ENCODE measurements at regions of chr16 and their contacts with region 1.

Region 1: GRCh38 chr16:3282730-3283524 is at the start of gene ZNF263:
- DNase-seq: peak; percentile 97 to 98
- ATAC-seq: peak; percentile 94
- H3K4me3 ChIP-seq: peak within 1 kb of the TSS; percentile 80
- H3K27ac ChIP-seq: peak within 1 kb of the TSS; percentile 90 to 97
- H3K4me1 ChIP-seq: no peaks in the 10 kb centered on the region
- CTCF ChIP-seq: no peak
- EP300 ChIP-seq: no peak
- POLR2A ChIP-seq: peak; percentile 67
- RAD21 ChIP-seq: no peak; a peak in 1 of 5 replicates
- polyA plus RNA-seq, gene ZNF263: 20.9 and 38.4 TPM in 2 replicates

Region 2: GRCh38 chr16:3188925-3189825 is 93.8 kb before region 1 on chr16:
- CTCF ChIA-PET with region 1: no interaction called
- POLR2A ChIA-PET with region 1: interaction called, 10 read pairs
- DNase-seq: peak; percentile 52 to 91
- ATAC-seq: peak; percentile 44 to 57
- H3K4me3 ChIP-seq: peak overlapping the region; percentile 71
- H3K27ac ChIP-seq: peak overlapping the region; percentile 73 to 89
- H3K4me1 ChIP-seq: peaks cover 14% of the 10 kb centered on the region
- CTCF ChIP-seq: no peak
- EP300 ChIP-seq: no peak
- POLR2A ChIP-seq: peak; percentile 47
- RAD21 ChIP-seq: no peak

Region 3: GRCh38 chr16:3214904-3215600 is 67.9 kb before region 1 on chr16:
- CTCF ChIA-PET with region 1: no interaction called
- POLR2A ChIA-PET with region 1: no interaction called
- DNase-seq: no peak
- ATAC-seq: no peak
- H3K4me3 ChIP-seq: no peak overlapping the region
- H3K27ac ChIP-seq: no peak overlapping the region
- H3K4me1 ChIP-seq: no peaks in the 10 kb centered on the region
- CTCF ChIP-seq: no peak
- EP300 ChIP-seq: no peak
- POLR2A ChIP-seq: no peak
- RAD21 ChIP-seq: no peak

Region 4: GRCh38 chr16:3305109-3306068 is 22.5 kb after region 1 on chr16 and contains the starts of genes TIGD7 and ZNF75A:
- CTCF ChIA-PET with region 1: interaction called, 4 read pairs
- POLR2A ChIA-PET with region 1: interaction called, 12 read pairs
- DNase-seq: peak; percentile 79 to 95
- ATAC-seq: peak; percentile 99
- H3K4me3 ChIP-seq: peak within 1 kb of the TSS; percentile 58
- H3K27ac ChIP-seq: peak within 1 kb of the TSS; percentile 74 to 90
- H3K4me1 ChIP-seq: no peaks in the 10 kb centered on the region
- CTCF ChIP-seq: no peak
- EP300 ChIP-seq: no peak
- POLR2A ChIP-seq: peak; percentile 77
- RAD21 ChIP-seq: 0 out of 5 replicates have a peak, but pooled peaks of 1 of the 2 experiments have one; percentile 9
- polyA plus RNA-seq, gene TIGD7: 3.0 and 4.3 TPM in 2 replicates
- polyA plus RNA-seq, gene ZNF75A: 27.3 and 28.8 TPM in 2 replicates

Region 5: GRCh38 chr16:3317315-3317999 is 34.5 kb after region 1 on chr16:
- CTCF ChIA-PET with region 1: no interaction called
- POLR2A ChIA-PET with region 1: no interaction called
- DNase-seq: peak in 1 of 2 experiments; percentile 51
- ATAC-seq: no peak
- H3K4me3 ChIP-seq: no peak overlapping the region
- H3K27ac ChIP-seq: no peak overlapping the region
- H3K4me1 ChIP-seq: no peaks in the 10 kb centered on the region
- CTCF ChIP-seq: no peak
- EP300 ChIP-seq: no peak
- POLR2A ChIP-seq: no peak
- RAD21 ChIP-seq: no peak

Region 6: GRCh38 chr16:3457434-3458252 is 174.7 kb after region 1 on chr16:
- CTCF ChIA-PET with region 1: no interaction called
- POLR2A ChIA-PET with region 1: interaction called, 11 read pairs
- DNase-seq: peak; percentile 92 to 98
- ATAC-seq: peak; percentile 90 to 95
- H3K4me3 ChIP-seq: peak overlapping the region; percentile 100
- H3K27ac ChIP-seq: peak overlapping the region; percentile 99
- H3K4me1 ChIP-seq: peaks cover 33% of the 10 kb centered on the region
- CTCF ChIP-seq: peak; percentile 45
- EP300 ChIP-seq: no peak; a peak in 1 of 5 replicates
- POLR2A ChIP-seq: peak; percentile 78
- RAD21 ChIP-seq: peak; percentile 29 to 56; a peak in 2 of 5 replicates

Measured in A549 (cell line).